ENCODE measurements at regions of chr18 and their contacts with region 1.

Region 1: DNA sequence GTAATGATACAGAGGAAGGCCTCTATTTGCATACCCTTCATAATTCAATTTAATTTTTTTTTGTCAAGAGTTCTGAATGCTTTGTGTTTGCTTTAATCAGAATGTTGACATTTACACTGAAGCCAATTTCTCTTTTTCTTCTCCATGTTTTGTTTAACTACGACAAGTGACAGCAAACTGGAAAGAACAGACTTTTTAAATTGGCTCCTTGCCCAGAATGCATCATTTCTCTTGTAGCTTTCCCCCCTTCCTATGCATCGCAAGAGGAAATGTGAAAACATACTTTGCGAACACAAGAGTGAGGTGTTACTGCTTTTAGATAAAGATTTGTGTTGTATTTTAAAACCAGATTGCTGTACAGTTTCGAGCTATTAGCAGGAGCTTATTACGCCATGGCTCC is 955.2 kb upstream of the CELF4 start:
- DNase-seq: no peak
- ATAC-seq: no peak
- H3K4me3 ChIP-seq: no peak overlapping the region
- H3K27ac ChIP-seq: no peak overlapping the region
- H3K4me1 ChIP-seq: no peaks in the 10 kb centered on the region
- H3K27me3 ChIP-seq: no peaks in the 10 kb centered on the region

Region 2: GRCh38 chr18:38459131-38459994 is 61.4 kb before region 1 on chr18:
- intact Hi-C with region 1: loop called in 1 of 2 experiments (anchors 10 kb)
- DNase-seq: no peak
- ATAC-seq: no peak
- H3K4me3 ChIP-seq: no peak overlapping the region
- H3K27ac ChIP-seq: no peak overlapping the region
- H3K4me1 ChIP-seq: no peaks in the 10 kb centered on the region
- H3K27me3 ChIP-seq: no peaks in the 10 kb centered on the region

Region 3: GRCh38 chr18:38475686-38476085 is 45.1 kb before region 1 on chr18:
- intact Hi-C with region 1: no loop called
- DNase-seq: no peak
- ATAC-seq: no peak
- H3K4me3 ChIP-seq: no peak overlapping the region
- H3K27ac ChIP-seq: no peak overlapping the region
- H3K4me1 ChIP-seq: no peaks in the 10 kb centered on the region
- H3K27me3 ChIP-seq: no peaks in the 10 kb centered on the region